MCF 10A (cell line): ENCODE measurements at regions of chr7 and their contacts with region 1.

Region 1: GRCh38 chr7:151172273-151173141 is 5.0 kb upstream of the GBX1 start:
- DNase-seq: peak; percentile 74
- H3K4me3 Mint-ChIP-seq: no peak overlapping the region
- H3K27ac Mint-ChIP-seq: no peak overlapping the region
- H3K4me1 Mint-ChIP-seq: no peaks in the 10 kb centered on the region
- H3K27me3 Mint-ChIP-seq: peaks cover 71% of the 10 kb centered on the region
- CTCF ChIP-seq: peak; percentile 100

Region 2: DNA sequence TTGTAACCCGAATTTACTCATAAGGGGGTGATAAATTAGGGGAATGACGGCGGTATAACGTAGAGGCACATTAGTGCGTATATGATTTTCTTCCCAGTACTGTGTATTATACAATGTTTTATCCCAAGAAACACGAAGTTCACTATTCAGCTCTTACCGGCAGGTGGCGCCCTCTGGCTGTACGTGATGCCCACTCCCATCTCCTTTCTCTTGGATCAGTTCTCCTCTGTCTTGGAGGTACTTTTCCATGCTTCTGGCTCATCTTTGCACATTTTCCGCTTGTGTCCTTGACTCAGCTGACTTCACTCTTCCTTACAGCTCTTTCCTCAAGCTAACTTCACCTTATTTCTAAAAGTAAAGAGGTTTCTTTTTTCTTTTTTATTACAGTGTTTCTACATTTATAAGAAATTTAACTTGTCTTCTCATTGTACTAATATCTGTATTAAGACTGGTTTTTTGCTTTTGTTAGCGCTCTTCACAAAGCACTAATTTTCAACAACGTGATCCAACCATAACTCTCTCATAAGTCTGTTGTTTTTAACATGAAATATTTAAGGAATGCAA is 393.7 kb before region 1 on chr7:
- CTCF ChIA-PET with region 1: no interaction called
- POLR2A ChIA-PET with region 1: no interaction called
- intact Hi-C with region 1: loop called (anchors 1 kb)
- DNase-seq: peak; percentile 75
- H3K4me3 Mint-ChIP-seq: no peak overlapping the region
- H3K27ac Mint-ChIP-seq: no peak overlapping the region
- H3K4me1 Mint-ChIP-seq: no peaks in the 10 kb centered on the region
- H3K27me3 Mint-ChIP-seq: peaks cover 23% of the 10 kb centered on the region
- CTCF ChIP-seq: peak; percentile 76

Region 3: DNA sequence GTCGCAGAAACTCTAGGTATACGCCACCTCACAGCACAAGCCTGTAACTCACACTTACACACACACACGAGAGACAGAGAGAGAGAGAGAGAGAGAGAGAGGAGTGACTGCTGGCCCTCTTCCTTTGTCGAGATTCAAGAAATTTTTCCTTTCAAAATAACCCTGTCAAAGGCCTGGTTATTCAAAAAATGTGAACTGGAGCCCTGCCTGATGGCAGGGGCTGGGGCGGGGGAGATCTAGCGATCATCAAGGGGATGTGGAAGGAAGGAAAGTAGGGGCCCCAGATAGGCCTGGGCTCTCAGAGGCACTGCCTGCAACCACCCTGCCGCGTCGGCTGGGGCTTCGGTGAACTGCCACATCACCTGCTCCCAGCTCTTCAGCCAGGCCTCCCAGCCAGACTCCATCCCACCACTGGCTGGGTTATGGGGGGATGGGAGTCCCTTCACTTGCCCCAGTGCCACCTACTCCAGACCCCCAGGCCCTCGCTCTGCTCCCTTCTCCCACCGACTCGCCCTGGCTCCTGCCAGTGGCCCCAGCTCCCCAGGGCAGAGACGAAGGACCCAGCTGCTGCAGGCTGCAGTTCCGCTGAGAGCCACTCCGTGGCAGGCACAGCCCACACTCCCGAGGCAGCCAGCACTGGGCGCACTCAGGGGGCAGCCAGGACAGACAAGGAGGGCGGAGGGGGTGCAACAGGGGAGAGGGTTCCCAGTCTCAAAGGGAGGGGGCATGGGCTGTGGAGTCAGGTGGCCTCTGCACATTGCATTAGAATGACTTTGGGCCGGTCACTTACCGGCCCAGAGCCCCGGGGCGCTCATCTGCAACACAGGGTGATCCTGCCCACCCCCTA is 209.7 kb before region 1 on chr7:
- CTCF ChIA-PET with region 1: interaction called, 4 read pairs
- POLR2A ChIA-PET with region 1: no interaction called
- intact Hi-C with region 1: loop called (anchors 2 kb)
- DNase-seq: peak; percentile 31
- H3K4me3 Mint-ChIP-seq: no peak overlapping the region
- H3K27ac Mint-ChIP-seq: no peak overlapping the region
- H3K4me1 Mint-ChIP-seq: no peaks in the 10 kb centered on the region
- H3K27me3 Mint-ChIP-seq: peaks cover 32% of the 10 kb centered on the region
- CTCF ChIP-seq: peak; percentile 92

Region 4: GRCh38 chr7:151123822-151124464 is 48.6 kb before region 1 on chr7:
- CTCF ChIA-PET with region 1: interaction called, 18 read pairs
- POLR2A ChIA-PET with region 1: no interaction called
- intact Hi-C with region 1: loop called (anchors 1 kb)
- DNase-seq: peak; percentile 82
- H3K4me3 Mint-ChIP-seq: no peak overlapping the region
- H3K27ac Mint-ChIP-seq: no peak overlapping the region
- H3K4me1 Mint-ChIP-seq: peaks cover 6% of the 10 kb centered on the region
- H3K27me3 Mint-ChIP-seq: no peaks in the 10 kb centered on the region
- CTCF ChIP-seq: peak; percentile 96

Region 5: GRCh38 chr7:151131592-151132293 is 40.8 kb before region 1 on chr7:
- CTCF ChIA-PET with region 1: interaction called, 18 read pairs
- POLR2A ChIA-PET with region 1: no interaction called
- intact Hi-C with region 1: no loop called
- DNase-seq: no peak
- H3K4me3 Mint-ChIP-seq: no peak overlapping the region
- H3K27ac Mint-ChIP-seq: no peak overlapping the region
- H3K4me1 Mint-ChIP-seq: no peaks in the 10 kb centered on the region
- H3K27me3 Mint-ChIP-seq: no peaks in the 10 kb centered on the region
- CTCF ChIP-seq: no peak